ENCODE measurements at regions of chr3 and their contacts with region 1.

Region 1: GRCh38 chr3:171772427-171773056 is 37.7 kb downstream of the PLD1 start:
- DNase-seq: peak; percentile 53
- ATAC-seq: peak; percentile 49
- H3K4me3 Mint-ChIP-seq: no peak overlapping the region
- H3K27ac Mint-ChIP-seq: no peak overlapping the region
- H3K4me1 Mint-ChIP-seq: no peaks in the 10 kb centered on the region
- H3K27me3 Mint-ChIP-seq: peaks cover 32% of the 10 kb centered on the region

Region 2: DNA sequence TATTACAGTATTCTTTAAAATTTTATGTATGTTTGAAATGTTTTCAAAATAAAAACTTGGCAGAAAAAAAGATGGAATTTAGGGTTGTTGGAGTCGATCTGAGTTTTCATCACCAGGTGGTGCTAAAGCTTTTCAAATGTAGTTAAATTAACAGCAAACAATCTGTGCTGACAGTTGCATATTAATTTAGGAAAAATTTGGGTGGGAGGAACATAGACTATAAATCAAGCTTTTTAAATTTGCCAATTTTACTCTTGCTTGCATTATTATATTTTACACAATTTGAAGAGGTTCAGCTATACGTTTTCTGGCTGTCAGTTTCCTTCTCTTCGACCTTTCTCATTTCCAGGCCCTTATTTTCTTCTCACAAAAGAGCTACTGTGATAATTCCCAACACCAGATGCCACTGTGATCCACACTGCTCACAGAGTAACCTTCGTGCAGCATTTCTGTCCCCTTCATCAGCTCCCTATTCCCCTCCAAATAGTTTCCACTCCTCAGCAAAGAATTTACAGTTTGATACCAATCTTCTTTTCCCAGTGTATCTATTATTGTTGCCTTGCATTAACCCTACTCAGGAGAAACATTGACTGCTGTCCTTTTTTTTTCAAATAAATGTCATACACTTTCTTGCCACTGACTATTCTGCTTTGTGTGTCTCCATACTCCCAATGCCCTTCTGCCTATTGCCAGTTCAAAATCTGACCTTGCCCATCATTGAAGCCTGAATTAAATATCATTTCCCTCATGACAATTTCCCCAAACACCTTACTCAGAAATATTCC is 810.7 kb before region 1 on chr3:
- CTCF ChIA-PET with region 1: interaction called, 25 read pairs
- DNase-seq: no peak
- ATAC-seq: no peak
- H3K4me3 Mint-ChIP-seq: no peak overlapping the region
- H3K27ac Mint-ChIP-seq: no peak overlapping the region
- H3K4me1 Mint-ChIP-seq: peaks cover 5% of the 10 kb centered on the region
- H3K27me3 Mint-ChIP-seq: peaks cover 19% of the 10 kb centered on the region

Region 3: GRCh38 chr3:171049861-171050444 is 722.6 kb before region 1 on chr3:
- CTCF ChIA-PET with region 1: interaction called, 16 read pairs
- DNase-seq: peak; percentile 64
- ATAC-seq: peak; percentile 76
- H3K4me3 Mint-ChIP-seq: no peak overlapping the region
- H3K27ac Mint-ChIP-seq: no peak overlapping the region
- H3K4me1 Mint-ChIP-seq: no peaks in the 10 kb centered on the region
- H3K27me3 Mint-ChIP-seq: peaks cover 8% of the 10 kb centered on the region

Region 4: GRCh38 chr3:171375666-171376595 is 396.6 kb before region 1 on chr3:
- CTCF ChIA-PET with region 1: no interaction called
- DNase-seq: no peak
- ATAC-seq: no peak
- H3K4me3 Mint-ChIP-seq: no peak overlapping the region
- H3K27ac Mint-ChIP-seq: no peak overlapping the region
- H3K4me1 Mint-ChIP-seq: peaks cover 4% of the 10 kb centered on the region
- H3K27me3 Mint-ChIP-seq: no peaks in the 10 kb centered on the region

Region 5: GRCh38 chr3:171822431-171823106 is 50.0 kb after region 1 on chr3:
- CTCF ChIA-PET with region 1: no interaction called
- DNase-seq: no peak
- ATAC-seq: no peak
- H3K4me3 Mint-ChIP-seq: no peak overlapping the region
- H3K27ac Mint-ChIP-seq: no peak overlapping the region
- H3K4me1 Mint-ChIP-seq: peaks cover 11% of the 10 kb centered on the region
- H3K27me3 Mint-ChIP-seq: peaks cover 42% of the 10 kb centered on the region

Measured in activated CD8-positive, alpha-beta memory T cell treated with anti-CD3 and anti-CD28 coated beads, Interleukin-2, amount 10 ng/mL, durations not matched to agents 7 days and 5 days (primary cell).